Dendritic cell treated with granulocyte-macrophage colony-stimulating factor and Interleukin-4, amounts not matched to agents 40 ng/mL and 50 ng/mL, for 4 days (primary cell): ENCODE measurements at regions of chr15 and their contacts with region 1.

Region 1: DNA sequence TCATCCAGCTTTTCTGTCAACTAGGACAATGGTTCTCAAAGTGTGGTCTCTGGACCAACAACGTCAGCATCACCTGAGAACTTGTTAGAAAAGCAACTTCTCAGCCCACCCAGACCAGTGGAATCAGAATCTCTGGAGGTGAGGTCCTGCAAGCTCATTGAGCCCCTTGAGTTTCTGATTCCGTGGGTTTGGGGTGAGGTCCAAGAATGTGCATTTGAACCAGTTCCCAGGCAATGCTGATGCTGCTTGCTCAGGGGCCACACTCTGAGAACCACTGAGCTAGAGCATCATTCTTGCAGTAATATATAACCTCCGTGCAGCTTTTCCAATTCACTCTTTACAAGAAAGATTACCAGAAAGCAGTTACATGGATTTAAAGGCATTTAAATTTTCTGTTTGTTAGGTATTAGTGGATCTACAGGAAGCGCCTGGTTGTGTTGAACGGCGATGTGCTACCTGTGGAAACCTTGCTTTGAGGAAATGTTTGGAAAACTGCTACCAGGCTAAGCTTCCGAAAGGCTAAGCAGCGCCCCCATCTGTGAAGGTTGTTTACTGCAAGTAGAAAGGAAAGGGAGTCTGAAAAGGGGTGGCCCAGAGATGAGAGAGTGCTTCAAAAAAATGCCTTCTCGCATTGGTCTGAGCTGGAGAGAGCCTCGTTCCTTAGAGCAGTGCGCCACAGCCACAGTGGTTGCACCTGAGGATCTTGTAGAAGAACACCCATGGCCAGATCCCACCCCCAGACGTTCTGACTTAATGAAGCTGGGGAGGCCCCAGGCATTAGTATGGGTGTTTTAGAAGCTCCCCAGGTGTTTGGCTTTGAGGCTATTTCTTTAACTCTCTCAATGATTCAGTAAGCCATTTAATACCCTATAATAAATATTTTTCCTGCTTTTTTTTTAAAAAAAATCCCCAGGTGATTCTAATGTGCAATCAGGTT is 50.0 kb downstream of the RLBP1 start:
- H3K4me3 Mint-ChIP-seq: no peak overlapping the region
- H3K27ac Mint-ChIP-seq: no peak overlapping the region
- H3K4me1 Mint-ChIP-seq: peaks cover 16% of the 10 kb centered on the region
- H3K27me3 Mint-ChIP-seq: no peaks in the 10 kb centered on the region

Region 2: DNA sequence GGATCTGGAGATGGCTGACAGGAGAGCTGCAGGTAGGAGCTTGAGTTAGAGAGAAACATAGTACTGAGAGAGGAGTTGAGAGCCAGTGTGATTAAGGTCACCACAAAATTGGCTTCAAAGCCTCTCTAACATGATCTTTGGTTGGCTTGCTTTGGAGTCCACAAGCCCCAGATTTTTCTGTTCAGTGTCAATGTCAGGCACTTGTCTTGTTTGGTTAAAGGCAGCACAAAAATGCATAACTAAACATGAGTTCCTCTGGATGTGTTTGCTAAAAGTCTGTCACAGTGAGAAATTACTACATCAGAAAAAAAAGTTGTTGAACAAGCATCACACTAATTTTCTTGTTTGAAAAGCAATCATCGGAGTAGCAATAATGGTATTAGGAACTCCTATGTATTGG is 1355.4 kb before region 1 on chr15:
- intact Hi-C with region 1: no loop called
- H3K4me3 Mint-ChIP-seq: no peak overlapping the region
- H3K27ac Mint-ChIP-seq: no peak overlapping the region
- H3K4me1 Mint-ChIP-seq: no peaks in the 10 kb centered on the region
- H3K27me3 Mint-ChIP-seq: peaks cover 6% of the 10 kb centered on the region

Region 3: GRCh38 chr15:89057504-89058133 is 113.8 kb before region 1 on chr15:
- intact Hi-C with region 1: loop called (anchors 1 kb)
- H3K4me3 Mint-ChIP-seq: no peak overlapping the region
- H3K27ac Mint-ChIP-seq: no peak overlapping the region
- H3K4me1 Mint-ChIP-seq: peaks cover 28% of the 10 kb centered on the region
- H3K27me3 Mint-ChIP-seq: peaks cover 2% of the 10 kb centered on the region